IMR-90 (cell line): ENCODE measurements at regions of chr13 and their contacts with region 1.

Region 1: GRCh38 chr13:50074843-50075242 is 59.6 kb downstream of the KCNRG start:
- DNase-seq: no peak
- ATAC-seq: no peak
- H3K4me3 ChIP-seq: no peak overlapping the region
- H3K27ac ChIP-seq: no peak overlapping the region
- H3K4me1 ChIP-seq: peaks cover 3% of the 10 kb centered on the region; the same call in 1 of the 2 replicates
- H3K27me3 ChIP-seq: no peaks in the 10 kb centered on the region
- CTCF ChIP-seq: no peak
- POLR2A ChIP-seq: no peak
- RAD21 ChIP-seq: no peak

Region 2: DNA sequence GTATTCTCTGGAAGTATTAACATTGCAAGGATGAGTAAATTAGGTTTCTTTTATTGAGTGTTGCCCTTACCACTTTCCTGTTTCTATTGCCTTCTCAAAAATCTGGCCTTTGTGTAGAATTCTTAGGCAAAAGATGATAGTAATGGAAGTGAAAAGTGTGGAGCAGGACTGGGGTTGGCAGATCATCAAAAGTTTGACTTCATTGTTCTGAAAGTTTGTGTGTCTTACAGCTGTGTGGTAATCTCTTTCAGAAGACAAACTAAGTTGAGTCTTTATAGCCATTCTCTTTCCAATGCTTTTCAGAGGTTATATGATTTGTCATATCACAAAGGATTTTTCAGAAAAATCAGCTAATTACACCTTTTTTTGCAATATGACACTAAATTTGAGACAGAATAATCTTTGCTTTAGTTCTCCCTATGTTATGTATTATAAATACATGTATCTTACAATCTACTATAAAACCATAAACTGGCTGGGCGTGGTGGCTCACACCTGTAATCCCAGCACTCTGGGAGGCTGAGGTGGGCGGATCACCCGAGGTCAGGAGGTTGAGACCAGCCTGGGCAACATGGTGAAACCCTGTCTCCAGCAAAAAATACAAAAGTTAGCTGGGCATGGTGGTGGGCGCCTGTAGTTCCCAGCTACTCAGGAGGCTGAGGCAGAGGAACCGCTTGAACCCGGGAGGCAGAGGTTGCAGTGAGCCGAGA is 68.3 kb before region 1 on chr13:
- CTCF ChIA-PET with region 1: no interaction called
- POLR2A ChIA-PET with region 1: no interaction called
- dilution Hi-C with region 1: no loop called
- in situ Hi-C with region 1: loop called (anchors 5 kb)
- intact Hi-C with region 1: no loop called
- DNase-seq: peak; percentile 55
- ATAC-seq: peak; percentile 37
- H3K4me3 ChIP-seq: no peak overlapping the region
- H3K27ac ChIP-seq: no peak overlapping the region
- H3K4me1 ChIP-seq: no peaks in the 10 kb centered on the region
- H3K27me3 ChIP-seq: no peaks in the 10 kb centered on the region
- CTCF ChIP-seq: no peak
- POLR2A ChIP-seq: no peak
- RAD21 ChIP-seq: no peak

Region 3: GRCh38 chr13:50543782-50544181 is 468.9 kb after region 1 on chr13:
- CTCF ChIA-PET with region 1: no interaction called
- POLR2A ChIA-PET with region 1: interaction called, 16 read pairs
- dilution Hi-C with region 1: no loop called
- in situ Hi-C with region 1: loop called (anchors 5 kb)
- intact Hi-C with region 1: no loop called
- DNase-seq: peak; percentile 91
- ATAC-seq: peak; percentile 99
- H3K4me3 ChIP-seq: no peak overlapping the region
- H3K27ac ChIP-seq: no peak overlapping the region; the same call in 1 of the 2 replicates
- H3K4me1 ChIP-seq: no peaks in the 10 kb centered on the region; the same call in 1 of the 2 replicates
- H3K27me3 ChIP-seq: no peaks in the 10 kb centered on the region; the same call in 1 of the 2 replicates
- CTCF ChIP-seq: no peak
- POLR2A ChIP-seq: no peak
- RAD21 ChIP-seq: no peak

Region 4: GRCh38 chr13:51590971-51591627 is 1516.3 kb after region 1 on chr13:
- CTCF ChIA-PET with region 1: no interaction called
- POLR2A ChIA-PET with region 1: no interaction called
- dilution Hi-C with region 1: no loop called
- in situ Hi-C with region 1: no loop called
- intact Hi-C with region 1: no loop called
- DNase-seq: peak; percentile 90
- ATAC-seq: peak; percentile 87
- H3K4me3 ChIP-seq: peak overlapping the region; percentile 12; the same call in 1 of the 2 replicates
- H3K27ac ChIP-seq: peak overlapping the region; percentile 80; the same call in 1 of the 2 replicates
- H3K4me1 ChIP-seq: peaks cover 7% of the 10 kb centered on the region
- H3K27me3 ChIP-seq: no peaks in the 10 kb centered on the region
- CTCF ChIP-seq: 0 out of 2 replicates have a peak, but pooled peaks have one; percentile 11
- POLR2A ChIP-seq: no peak
- RAD21 ChIP-seq: no peak; the same call in none of the 2 replicates